WTC11 (cell line): ENCODE measurements at regions of chr3 and their contacts with region 1.

Region 1: GRCh38 chr3:11944052-11944673 is 60.0 kb upstream of the SYN2 start:
- DNase-seq: peak; percentile 50
- ATAC-seq: peak; percentile 100
- H3K4me3 Mint-ChIP-seq: no peak overlapping the region
- H3K27ac Mint-ChIP-seq: no peak overlapping the region
- H3K4me1 Mint-ChIP-seq: no peaks in the 10 kb centered on the region
- H3K27me3 Mint-ChIP-seq: no peaks in the 10 kb centered on the region; the same call in 1 of the 2 replicates
- CTCF ChIP-seq: peak; percentile 41; the same call in 1 of the 2 replicates

Region 2: GRCh38 chr3:11954312-11954934 is 10.3 kb after region 1 on chr3:
- CTCF ChIA-PET with region 1: interaction called, 36 read pairs
- POLR2A ChIA-PET with region 1: no interaction called
- DNase-seq: no peak
- ATAC-seq: no peak
- H3K4me3 Mint-ChIP-seq: no peak overlapping the region
- H3K27ac Mint-ChIP-seq: no peak overlapping the region
- H3K4me1 Mint-ChIP-seq: no peaks in the 10 kb centered on the region
- H3K27me3 Mint-ChIP-seq: no peaks in the 10 kb centered on the region
- CTCF ChIP-seq: no peak